CD8-positive, alpha-beta memory T cell (primary cell): ENCODE measurements at regions of chr7 and their contacts with region 1.

Region 1: GRCh38 chr7:33062782-33063443 is 337 bp upstream of the NT5C3A start:
- DNase-seq: peak; percentile 87 to 95 (median 94)
- H3K4me3 ChIP-seq: peak overlapping the region; percentile 82
- H3K4me3 Mint-ChIP-seq: peak overlapping the region; percentile 87 to 98 (median 95)
- H3K27ac ChIP-seq: peak overlapping the region; percentile 77
- H3K27ac Mint-ChIP-seq: peak overlapping the region; percentile 85 to 99 (median 96)
- H3K4me1 ChIP-seq: peaks cover 30% of the 10 kb centered on the region
- H3K4me1 Mint-ChIP-seq: peaks cover 39 to 49% (median 48%) of the 10 kb centered on the region in 3 donors
- H3K27me3 ChIP-seq: no peaks in the 10 kb centered on the region
- H3K27me3 Mint-ChIP-seq: peaks cover 1 to 9% of the 10 kb centered on the region in 2 donors

Region 2: GRCh38 chr7:33040803-33041516 is 22.0 kb before region 1 on chr7:
- CTCF ChIA-PET with region 1: interaction called, 11 read pairs
- POLR2A ChIA-PET with region 1: interaction called, 9 read pairs
- DNase-seq: peak; percentile 46 to 77 (median 65)
- H3K4me3 ChIP-seq: peak overlapping the region; percentile 23
- H3K4me3 Mint-ChIP-seq: peak overlapping the region; percentile 76 to 85 (median 82)
- H3K27ac ChIP-seq: peak overlapping the region; percentile 55
- H3K27ac Mint-ChIP-seq: peak overlapping the region; percentile 86 to 96 (median 94)
- H3K4me1 ChIP-seq: peaks cover 24% of the 10 kb centered on the region
- H3K4me1 Mint-ChIP-seq: peaks cover 50 to 73% (median 66%) of the 10 kb centered on the region in 3 donors
- H3K27me3 ChIP-seq: no peaks in the 10 kb centered on the region
- H3K27me3 Mint-ChIP-seq: no peaks in the 10 kb centered on the region

Region 3: GRCh38 chr7:33109005-33109757 is 46.3 kb after region 1 on chr7 and contains the start of gene RP9:
- CTCF ChIA-PET with region 1: interaction called, 22 read pairs
- POLR2A ChIA-PET with region 1: interaction called, 7 read pairs
- DNase-seq: peak; percentile 66 to 82 (median 78)
- H3K4me3 ChIP-seq: peak within 1 kb of the TSS; percentile 82
- H3K4me3 Mint-ChIP-seq: peak within 1 kb of the TSS; percentile 76 to 92 (median 84)
- H3K27ac ChIP-seq: peak within 1 kb of the TSS; percentile 74
- H3K27ac Mint-ChIP-seq: peak within 1 kb of the TSS; percentile 34 to 92 (median 83)
- H3K4me1 ChIP-seq: peaks cover 26% of the 10 kb centered on the region
- H3K4me1 Mint-ChIP-seq: peaks cover 32 to 55% (median 50%) of the 10 kb centered on the region in 3 donors
- H3K27me3 ChIP-seq: no peaks in the 10 kb centered on the region
- H3K27me3 Mint-ChIP-seq: peaks cover 3 to 14% of the 10 kb centered on the region in 2 donors
- total RNA-seq, gene RP9: 26.0 to 27.7 TPM